ENCODE measurements at regions of chr3 and their contacts with region 1.

Region 1: GRCh38 chr3:174440741-174441587 is 418.2 kb upstream of the NAALADL2 start:
- DNase-seq: peak; percentile 92
- ATAC-seq: peak; percentile 72
- H3K4me3 ChIP-seq: peak overlapping the region; percentile 73
- H3K27ac ChIP-seq: peak overlapping the region; percentile 96
- H3K4me1 ChIP-seq: peaks cover 8% of the 10 kb centered on the region
- H3K27me3 ChIP-seq: no peaks in the 10 kb centered on the region
- CTCF ChIP-seq: peak; percentile 21; the same call in 1 of the 2 replicates
- POLR2A ChIP-seq: peak; percentile 71; the same call in 1 of the 2 replicates
- RAD21 ChIP-seq: no peak; the same call in 1 of the 2 replicates

Region 2: DNA sequence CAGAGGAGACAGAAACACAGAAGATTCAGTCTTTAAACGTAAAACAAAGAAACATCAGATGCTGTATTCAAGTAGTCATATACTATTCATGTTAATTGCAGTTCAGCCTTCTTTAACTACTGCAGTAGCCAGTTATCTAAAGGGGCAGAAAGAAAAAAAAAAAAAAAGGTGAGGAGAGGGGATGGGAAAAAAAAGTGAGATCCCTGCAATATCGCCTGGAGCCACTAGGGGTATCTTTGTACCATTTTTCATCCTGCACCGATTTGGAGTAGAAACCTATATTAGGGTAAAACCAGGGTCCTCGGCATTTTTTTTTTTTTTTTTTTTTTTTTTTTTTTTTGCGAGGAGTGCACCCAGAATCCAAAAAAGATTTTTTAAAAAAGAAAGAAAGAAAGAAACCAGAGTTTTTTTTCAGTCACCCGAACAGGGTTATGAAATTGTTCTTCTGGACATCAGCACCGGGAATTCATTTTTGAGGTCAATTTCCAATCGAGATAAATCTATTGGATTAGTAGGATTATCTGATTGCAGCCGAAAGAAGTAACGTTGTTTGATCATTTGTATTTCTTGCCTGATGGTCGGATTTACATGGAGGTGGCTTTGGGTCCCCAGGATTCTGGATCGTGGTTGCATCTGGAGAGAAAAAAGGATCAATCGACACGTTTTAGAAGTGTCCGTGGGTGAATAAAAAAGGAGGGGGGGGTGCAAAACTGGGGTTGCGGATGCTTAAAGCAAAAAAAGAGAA is 856.7 kb before region 1 on chr3:
- CTCF ChIA-PET with region 1: no interaction called
- POLR2A ChIA-PET with region 1: interaction called, 4 read pairs
- dilution Hi-C with region 1: no loop called
- in situ Hi-C with region 1: no loop called
- intact Hi-C with region 1: loop called (anchors 2 kb)
- DNase-seq: peak; percentile 44
- ATAC-seq: peak; percentile 57; the same call in 1 of the 2 replicates
- H3K4me3 ChIP-seq: peak overlapping the region; percentile 62
- H3K27ac ChIP-seq: no peak overlapping the region
- H3K4me1 ChIP-seq: no peaks in the 10 kb centered on the region
- H3K27me3 ChIP-seq: no peaks in the 10 kb centered on the region
- CTCF ChIP-seq: peak; percentile 73
- POLR2A ChIP-seq: no peak
- RAD21 ChIP-seq: peak; percentile 71

Region 3: DNA sequence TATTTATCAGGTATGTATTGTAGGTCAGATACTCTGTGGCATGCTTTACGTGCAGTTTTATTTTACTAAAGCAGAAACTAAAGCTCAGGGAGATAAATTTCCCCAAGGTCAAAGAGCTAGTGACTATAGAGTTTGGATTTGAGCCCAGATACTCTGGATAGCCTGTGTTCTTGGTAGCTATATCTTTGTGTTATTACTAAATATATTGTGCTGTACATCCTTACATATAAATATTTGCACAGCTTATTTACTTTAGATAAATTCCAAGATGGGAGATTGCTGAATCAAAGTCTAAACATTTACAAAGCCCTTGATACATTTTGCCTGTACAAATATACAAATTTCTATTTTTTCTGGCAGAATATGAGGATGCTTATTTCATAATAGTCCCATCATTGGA is 242.8 kb before region 1 on chr3:
- CTCF ChIA-PET with region 1: no interaction called
- POLR2A ChIA-PET with region 1: no interaction called
- dilution Hi-C with region 1: no loop called
- in situ Hi-C with region 1: no loop called
- intact Hi-C with region 1: loop called (anchors 5 kb)
- DNase-seq: peak; percentile 95
- ATAC-seq: peak; percentile 87
- H3K4me3 ChIP-seq: no peak overlapping the region
- H3K27ac ChIP-seq: no peak overlapping the region; the same call in 1 of the 2 replicates
- H3K4me1 ChIP-seq: peaks cover 7% of the 10 kb centered on the region
- H3K27me3 ChIP-seq: no peaks in the 10 kb centered on the region
- CTCF ChIP-seq: no peak
- POLR2A ChIP-seq: no peak
- RAD21 ChIP-seq: no peak

Region 4: GRCh38 chr3:174869448-174869847 is 428.5 kb after region 1 on chr3:
- CTCF ChIA-PET with region 1: no interaction called
- POLR2A ChIA-PET with region 1: no interaction called
- dilution Hi-C with region 1: no loop called
- in situ Hi-C with region 1: no loop called
- intact Hi-C with region 1: loop called (anchors 5 kb)
- DNase-seq: peak; percentile 93
- ATAC-seq: peak; percentile 93
- H3K4me3 ChIP-seq: peak overlapping the region; percentile 25; the same call in 1 of the 2 replicates
- H3K27ac ChIP-seq: peak overlapping the region; percentile 83; the same call in 1 of the 2 replicates
- H3K4me1 ChIP-seq: peaks cover 3% of the 10 kb centered on the region
- H3K27me3 ChIP-seq: no peaks in the 10 kb centered on the region
- CTCF ChIP-seq: no peak
- POLR2A ChIP-seq: no peak
- RAD21 ChIP-seq: no peak

Region 5: GRCh38 chr3:175002732-175003143 is 561.8 kb after region 1 on chr3:
- CTCF ChIA-PET with region 1: no interaction called
- POLR2A ChIA-PET with region 1: interaction called, 6 read pairs
- dilution Hi-C with region 1: no loop called
- in situ Hi-C with region 1: no loop called
- intact Hi-C with region 1: loop called (anchors 1 kb)
- DNase-seq: peak; percentile 99
- ATAC-seq: peak; percentile 95
- H3K4me3 ChIP-seq: no peak overlapping the region
- H3K27ac ChIP-seq: peak overlapping the region; percentile 98; the same call in 1 of the 2 replicates
- H3K4me1 ChIP-seq: peaks cover 19% of the 10 kb centered on the region
- H3K27me3 ChIP-seq: no peaks in the 10 kb centered on the region
- CTCF ChIP-seq: no peak
- POLR2A ChIP-seq: no peak
- RAD21 ChIP-seq: 0 out of 2 replicates have a peak, but pooled peaks have one; percentile 16

Region 6: GRCh38 chr3:175398696-175399095 is 957.7 kb after region 1 on chr3:
- CTCF ChIA-PET with region 1: no interaction called
- POLR2A ChIA-PET with region 1: no interaction called
- dilution Hi-C with region 1: no loop called
- in situ Hi-C with region 1: no loop called
- intact Hi-C with region 1: loop called (anchors 2 kb)
- DNase-seq: peak; percentile 88
- ATAC-seq: peak; percentile 82
- H3K4me3 ChIP-seq: no peak overlapping the region
- H3K27ac ChIP-seq: no peak overlapping the region
- H3K4me1 ChIP-seq: peaks cover 12% of the 10 kb centered on the region
- H3K27me3 ChIP-seq: no peaks in the 10 kb centered on the region
- CTCF ChIP-seq: no peak
- POLR2A ChIP-seq: no peak
- RAD21 ChIP-seq: no peak

Region 7: GRCh38 chr3:176430244-176431037 is 1989.5 kb after region 1 on chr3:
- CTCF ChIA-PET with region 1: no interaction called
- POLR2A ChIA-PET with region 1: no interaction called
- dilution Hi-C with region 1: no loop called
- in situ Hi-C with region 1: no loop called
- intact Hi-C with region 1: loop called (anchors 1 kb)
- DNase-seq: peak; percentile 76
- ATAC-seq: peak; percentile 91
- H3K4me3 ChIP-seq: no peak overlapping the region
- H3K27ac ChIP-seq: no peak overlapping the region
- H3K4me1 ChIP-seq: peaks cover 2% of the 10 kb centered on the region; the same call in 1 of the 2 replicates
- H3K27me3 ChIP-seq: no peaks in the 10 kb centered on the region
- CTCF ChIP-seq: peak; percentile 90
- POLR2A ChIP-seq: no peak
- RAD21 ChIP-seq: peak; percentile 90